ENCODE measurements at regions of chr21 and their contacts with region 1.

Region 1: GRCh38 chr21:44011980-44012527 is at the start of gene TRAPPC10:
- DNase-seq: peak; percentile 80
- H3K4me3 Mint-ChIP-seq: peak within 1 kb of the TSS; percentile 91
- H3K27ac Mint-ChIP-seq: peak within 1 kb of the TSS; percentile 89
- H3K4me1 Mint-ChIP-seq: peaks cover 39% of the 10 kb centered on the region
- H3K27me3 Mint-ChIP-seq: no peaks in the 10 kb centered on the region
- total RNA-seq, gene TRAPPC10: 67.3 and 69.9 TPM in 2 replicates

Region 2: DNA sequence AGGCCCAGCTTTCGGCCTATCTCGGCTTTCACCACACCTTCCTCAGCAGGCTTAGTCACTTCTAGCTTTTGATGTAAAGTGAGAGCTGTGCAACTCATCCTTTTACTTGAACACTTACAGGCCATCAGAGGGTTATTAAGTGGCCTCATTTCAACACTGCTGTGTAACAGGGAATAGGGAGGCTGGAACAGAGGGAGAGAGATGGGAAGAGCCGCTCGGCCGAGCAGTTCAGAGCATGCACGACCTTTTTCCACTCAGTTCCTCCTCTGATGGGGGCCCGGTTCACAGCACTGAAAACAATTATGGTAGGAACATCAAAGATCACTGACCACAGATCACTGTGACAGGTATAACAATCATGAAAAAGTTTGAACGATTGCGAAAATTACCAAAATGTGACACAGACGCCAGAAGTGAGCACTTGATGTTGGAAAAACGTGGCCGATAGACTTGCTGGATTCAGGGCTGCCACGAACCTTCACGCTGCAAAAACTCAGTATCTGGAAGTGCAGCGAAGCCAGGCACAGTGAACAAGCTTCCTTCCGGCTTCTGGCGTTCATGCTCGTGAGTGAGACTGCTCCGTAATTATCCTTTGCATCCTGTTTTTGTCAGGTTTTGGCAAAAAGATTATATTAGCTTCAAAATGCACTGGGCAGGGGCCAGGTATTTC is 118.4 kb before region 1 on chr21:
- intact Hi-C with region 1: no loop called
- DNase-seq: peak; percentile 26
- H3K4me3 Mint-ChIP-seq: peak overlapping the region; percentile 56
- H3K27ac Mint-ChIP-seq: peak overlapping the region; percentile 83
- H3K4me1 Mint-ChIP-seq: peaks cover 37% of the 10 kb centered on the region
- H3K27me3 Mint-ChIP-seq: no peaks in the 10 kb centered on the region

Region 3: GRCh38 chr21:44083631-44084291 is 71.7 kb after region 1 on chr21:
- intact Hi-C with region 1: loop called (anchors 1 kb)
- DNase-seq: peak; percentile 62
- H3K4me3 Mint-ChIP-seq: peak overlapping the region; percentile 57
- H3K27ac Mint-ChIP-seq: peak overlapping the region; percentile 95
- H3K4me1 Mint-ChIP-seq: peaks cover 64% of the 10 kb centered on the region
- H3K27me3 Mint-ChIP-seq: no peaks in the 10 kb centered on the region